ENCODE measurements at regions of chr1 and their contacts with region 1.

Region 1: DNA sequence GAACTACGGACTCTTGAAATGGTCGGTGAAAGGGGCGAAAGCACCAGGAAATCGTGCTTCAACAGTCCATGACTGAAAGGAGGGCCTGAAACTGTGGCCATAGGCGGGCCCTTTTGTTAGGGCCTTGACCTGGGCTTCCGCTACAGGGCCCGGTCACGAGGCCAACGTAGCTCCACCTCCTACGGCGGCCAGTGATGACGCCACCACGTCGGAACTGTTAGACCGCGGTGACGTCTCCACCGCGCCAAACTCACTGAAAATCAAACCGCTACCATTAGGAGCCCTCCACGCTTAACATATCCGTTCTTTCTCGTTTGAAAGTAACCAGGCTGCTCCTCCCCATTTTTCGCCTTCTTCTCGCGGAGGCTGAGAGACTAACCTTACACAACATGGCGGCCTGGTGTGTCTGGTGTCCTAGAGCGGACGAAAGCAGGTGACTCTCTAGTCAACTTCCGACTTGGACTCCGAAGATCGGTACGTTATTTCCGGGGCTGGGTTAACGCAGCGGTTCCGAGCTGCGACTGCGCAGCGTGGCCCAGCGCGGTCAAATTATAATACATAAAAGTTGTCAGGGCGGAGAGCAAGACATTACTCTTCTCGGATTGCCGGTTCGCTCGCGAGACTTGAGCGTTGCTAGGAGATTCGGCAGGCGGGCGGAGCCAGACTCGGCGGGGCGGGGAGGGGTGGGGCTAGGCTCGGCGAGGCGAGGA is 376 bp upstream of the CACYBP start:
- DNase-seq: peak; percentile 98
- ATAC-seq: peak; percentile 81
- H3K4me3 Mint-ChIP-seq: no peak overlapping the region
- H3K27ac Mint-ChIP-seq: no peak overlapping the region
- H3K4me1 Mint-ChIP-seq: peaks cover 42% of the 10 kb centered on the region
- H3K27me3 Mint-ChIP-seq: no peaks in the 10 kb centered on the region

Region 2: DNA sequence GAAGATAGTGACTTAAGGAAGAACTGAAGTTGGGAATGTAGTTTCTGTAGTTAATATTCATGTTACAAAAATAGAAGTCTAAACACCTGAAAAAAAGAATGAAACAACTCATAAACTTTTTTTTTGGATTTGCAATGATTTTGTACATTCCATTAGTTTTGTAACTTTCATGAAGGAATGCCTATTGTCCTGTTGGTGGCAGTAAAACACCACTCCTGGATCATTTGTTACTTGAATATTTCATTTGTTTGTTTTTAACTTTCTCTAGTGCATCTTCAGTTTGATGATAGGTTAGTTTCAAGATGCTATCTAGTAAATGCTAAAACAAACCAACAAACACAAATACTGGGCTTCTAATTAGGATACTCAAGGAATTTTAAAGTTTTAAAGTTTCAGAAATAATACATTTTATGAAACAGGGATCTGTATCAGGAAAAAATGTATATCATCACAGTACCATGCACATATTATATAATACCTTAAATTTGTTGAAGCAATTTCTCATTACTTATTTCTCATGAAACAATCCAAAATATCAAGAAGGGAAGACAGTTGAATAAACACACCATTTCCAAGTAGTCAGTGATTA is 229.3 kb before region 1 on chr1:
- CTCF ChIA-PET with region 1: interaction called, 13 read pairs
- POLR2A ChIA-PET with region 1: interaction called, 4 read pairs
- DNase-seq: peak; percentile 31
- ATAC-seq: no peak
- H3K4me3 Mint-ChIP-seq: no peak overlapping the region
- H3K27ac Mint-ChIP-seq: no peak overlapping the region
- H3K4me1 Mint-ChIP-seq: peaks cover 6% of the 10 kb centered on the region
- H3K27me3 Mint-ChIP-seq: no peaks in the 10 kb centered on the region

Region 3: DNA sequence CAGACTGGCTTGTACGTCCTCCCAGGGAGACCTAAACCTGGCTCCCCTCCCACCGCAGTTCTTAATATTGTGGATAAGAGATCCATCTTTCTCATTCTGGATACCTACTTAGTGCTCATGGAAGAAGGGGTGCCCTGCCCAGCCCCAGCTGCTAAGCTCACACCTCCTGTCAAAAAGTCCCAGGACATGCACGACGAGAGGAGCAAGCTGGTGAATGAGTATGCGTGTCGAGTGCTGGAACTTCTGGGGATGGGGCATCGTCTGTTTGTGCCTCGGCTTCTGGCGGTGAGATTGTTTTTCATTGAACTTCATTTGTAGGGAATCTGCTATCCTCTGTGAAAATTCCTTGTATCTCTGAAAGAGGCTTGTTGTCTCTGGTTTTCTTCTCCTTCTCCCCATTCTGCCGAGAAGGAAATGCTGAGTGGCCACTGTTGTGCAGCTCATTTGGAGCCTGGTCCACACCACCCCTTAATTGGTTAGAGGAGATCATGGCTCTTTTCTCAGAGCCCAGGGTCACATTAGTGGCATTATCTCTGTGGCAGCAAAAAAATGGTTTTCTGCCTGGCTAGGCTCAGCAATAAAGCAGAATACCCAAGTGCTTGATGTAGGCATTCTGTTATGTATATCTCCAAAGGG is 199.0 kb before region 1 on chr1:
- CTCF ChIA-PET with region 1: interaction called, 10 read pairs
- POLR2A ChIA-PET with region 1: interaction called, 43 read pairs
- DNase-seq: peak; percentile 23
- ATAC-seq: peak; percentile 24
- H3K4me3 Mint-ChIP-seq: no peak overlapping the region
- H3K27ac Mint-ChIP-seq: no peak overlapping the region
- H3K4me1 Mint-ChIP-seq: peaks cover 5% of the 10 kb centered on the region
- H3K27me3 Mint-ChIP-seq: no peaks in the 10 kb centered on the region

Region 4: GRCh38 chr1:174890024-174890423 is 109.3 kb before region 1 on chr1:
- CTCF ChIA-PET with region 1: no interaction called
- POLR2A ChIA-PET with region 1: no interaction called
- DNase-seq: no peak
- ATAC-seq: no peak
- H3K4me3 Mint-ChIP-seq: no peak overlapping the region
- H3K27ac Mint-ChIP-seq: no peak overlapping the region
- H3K4me1 Mint-ChIP-seq: no peaks in the 10 kb centered on the region
- H3K27me3 Mint-ChIP-seq: no peaks in the 10 kb centered on the region

Region 5: DNA sequence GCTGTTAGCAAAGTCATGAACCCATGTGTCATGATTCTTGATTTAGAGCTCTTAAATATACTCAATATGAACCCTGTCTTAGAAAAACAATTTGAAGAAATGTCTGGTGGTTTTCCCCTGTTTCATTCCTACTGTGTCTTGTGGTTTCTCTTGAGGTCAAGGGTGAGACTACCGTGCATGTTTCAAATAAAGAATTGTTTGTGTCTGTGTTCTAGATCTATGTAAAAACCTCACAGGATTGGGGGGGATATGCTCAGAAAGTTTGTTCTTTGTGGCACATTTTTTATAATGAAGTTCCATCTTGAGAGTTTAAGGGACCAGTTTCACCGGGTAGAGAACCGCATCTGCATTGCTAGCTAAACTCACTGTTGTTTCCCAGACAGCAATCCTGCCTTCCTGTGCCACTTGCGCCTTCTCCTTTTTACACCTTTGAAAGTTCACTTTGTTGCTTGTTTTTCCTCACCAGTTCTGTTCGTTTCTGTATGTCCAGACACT is 30.6 kb before region 1 on chr1:
- CTCF ChIA-PET with region 1: interaction called, 36 read pairs
- POLR2A ChIA-PET with region 1: interaction called, 69 read pairs
- DNase-seq: peak; percentile 58
- ATAC-seq: peak; percentile 53
- H3K4me3 Mint-ChIP-seq: peak overlapping the region; percentile 53
- H3K27ac Mint-ChIP-seq: peak overlapping the region; percentile 80
- H3K4me1 Mint-ChIP-seq: peaks cover 77% of the 10 kb centered on the region
- H3K27me3 Mint-ChIP-seq: no peaks in the 10 kb centered on the region

Region 6: DNA sequence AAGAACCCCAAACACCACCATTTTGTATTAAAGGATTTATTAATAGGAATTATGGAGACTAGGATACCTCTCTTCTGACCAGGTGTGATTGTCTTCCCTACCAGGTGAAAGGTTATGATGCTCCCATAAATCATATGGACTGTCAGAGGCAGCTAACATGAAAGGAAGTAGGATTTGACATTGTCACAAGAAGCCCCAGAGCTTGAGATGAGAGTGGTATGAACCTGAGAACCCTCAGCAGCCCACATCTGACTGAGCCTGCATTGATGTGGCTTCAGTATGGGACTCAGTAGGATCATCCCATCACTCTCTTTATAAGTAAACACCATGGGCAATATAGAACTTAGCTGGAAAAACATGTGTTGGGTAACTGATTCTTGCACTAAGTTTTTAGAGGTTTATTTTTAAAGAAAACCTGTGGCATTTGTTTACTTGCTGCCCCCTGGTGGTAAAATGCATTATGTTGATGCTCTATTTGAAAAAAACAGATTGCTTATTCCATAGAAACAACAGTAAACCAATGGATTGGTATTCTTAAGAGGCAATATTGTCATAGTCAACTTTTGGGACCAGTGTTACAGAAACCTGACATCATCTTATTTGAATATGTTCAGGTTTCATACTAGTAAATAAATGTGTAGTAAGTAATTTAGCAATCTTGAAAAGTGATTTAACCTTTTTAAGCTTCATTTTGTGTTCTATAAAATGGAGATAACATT is 16.2 kb before region 1 on chr1:
- CTCF ChIA-PET with region 1: interaction called, 57 read pairs
- POLR2A ChIA-PET with region 1: interaction called, 30 read pairs
- DNase-seq: peak; percentile 66
- ATAC-seq: no peak
- H3K4me3 Mint-ChIP-seq: no peak overlapping the region
- H3K27ac Mint-ChIP-seq: no peak overlapping the region
- H3K4me1 Mint-ChIP-seq: peaks cover 16% of the 10 kb centered on the region
- H3K27me3 Mint-ChIP-seq: no peaks in the 10 kb centered on the region

Region 7: DNA sequence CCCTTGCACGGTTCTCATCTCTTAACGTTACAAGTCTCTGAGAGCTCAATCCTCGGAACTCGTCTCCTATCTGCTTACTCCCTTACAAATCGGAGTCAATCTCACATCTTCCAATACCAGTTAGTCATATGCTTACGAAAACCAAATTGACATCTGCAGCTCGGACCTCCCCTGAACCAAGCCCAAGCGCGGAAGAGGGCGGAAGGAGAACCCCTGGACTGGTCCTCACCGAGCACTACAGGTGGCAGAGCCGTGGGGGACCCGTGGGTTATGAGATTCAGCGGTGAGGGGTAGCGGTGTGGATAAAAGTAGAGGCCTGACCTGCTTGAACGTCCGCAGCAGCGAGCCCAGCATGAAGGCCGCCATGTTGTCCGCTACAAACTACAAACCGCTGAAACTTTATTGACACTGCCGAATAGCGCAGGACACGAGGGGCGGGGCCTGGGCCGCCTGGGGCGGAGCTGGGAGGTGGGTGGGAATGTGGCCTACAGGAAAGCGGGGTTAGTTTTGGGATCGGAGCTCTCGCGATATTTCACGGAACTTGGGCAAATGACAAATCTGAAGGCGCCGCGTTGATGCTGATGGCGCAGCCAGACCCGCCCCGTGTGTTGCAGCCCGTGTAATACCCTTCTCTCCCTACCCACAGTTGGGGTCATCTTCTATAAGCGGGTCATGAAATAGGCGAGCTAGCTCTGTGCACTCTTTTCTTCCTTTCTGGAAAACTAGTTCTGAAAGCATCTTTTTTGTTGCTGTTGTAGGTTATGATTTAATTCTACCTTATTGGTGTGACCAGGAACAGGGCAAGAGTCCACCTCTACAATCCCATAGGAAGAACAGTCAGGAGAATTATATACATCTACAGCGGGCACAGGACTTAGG is 23.9 kb after region 1 on chr1 and contains the start of gene MRPS14:
- CTCF ChIA-PET with region 1: interaction called, 17 read pairs
- POLR2A ChIA-PET with region 1: interaction called, 67 read pairs
- DNase-seq: peak; percentile 99
- ATAC-seq: peak; percentile 93
- H3K4me3 Mint-ChIP-seq: peak within 1 kb of the TSS; percentile 93
- H3K27ac Mint-ChIP-seq: peak within 1 kb of the TSS; percentile 92
- H3K4me1 Mint-ChIP-seq: peaks cover 36% of the 10 kb centered on the region
- H3K27me3 Mint-ChIP-seq: no peaks in the 10 kb centered on the region
- total RNA-seq, gene MRPS14: 30.2 to 33.7 TPM

Region 8: GRCh38 chr1:175072099-175072951 is 73.0 kb after region 1 on chr1:
- CTCF ChIA-PET with region 1: no interaction called
- POLR2A ChIA-PET with region 1: no interaction called
- DNase-seq: peak; percentile 45
- ATAC-seq: peak; percentile 71
- H3K4me3 Mint-ChIP-seq: peak overlapping the region; percentile 55
- H3K27ac Mint-ChIP-seq: no peak overlapping the region
- H3K4me1 Mint-ChIP-seq: peaks cover 18% of the 10 kb centered on the region
- H3K27me3 Mint-ChIP-seq: peaks cover 10% of the 10 kb centered on the region

Region 9: GRCh38 chr1:175132436-175132835 is 133.1 kb after region 1 on chr1:
- CTCF ChIA-PET with region 1: no interaction called
- POLR2A ChIA-PET with region 1: no interaction called
- DNase-seq: no peak
- ATAC-seq: no peak
- H3K4me3 Mint-ChIP-seq: no peak overlapping the region
- H3K27ac Mint-ChIP-seq: no peak overlapping the region
- H3K4me1 Mint-ChIP-seq: no peaks in the 10 kb centered on the region
- H3K27me3 Mint-ChIP-seq: peaks cover 29% of the 10 kb centered on the region

Region 10: GRCh38 chr1:175353066-175353465 is 353.7 kb after region 1 on chr1:
- CTCF ChIA-PET with region 1: no interaction called
- POLR2A ChIA-PET with region 1: no interaction called
- DNase-seq: no peak
- ATAC-seq: no peak
- H3K4me3 Mint-ChIP-seq: no peak overlapping the region
- H3K27ac Mint-ChIP-seq: no peak overlapping the region
- H3K4me1 Mint-ChIP-seq: no peaks in the 10 kb centered on the region
- H3K27me3 Mint-ChIP-seq: peaks cover 16% of the 10 kb centered on the region